ENCODE measurements at regions of chr13 and their contacts with region 1.

Region 1: GRCh38 chr13:110715395-110716235 is 2.1 kb downstream of the ING1 start:
- DNase-seq: peak; percentile 93
- ATAC-seq: peak; percentile 68
- H3K4me3 Mint-ChIP-seq: peak overlapping the region; percentile 91
- H3K27ac Mint-ChIP-seq: peak overlapping the region; percentile 93
- H3K4me1 Mint-ChIP-seq: peaks cover 20% of the 10 kb centered on the region
- H3K27me3 Mint-ChIP-seq: no peaks in the 10 kb centered on the region

Region 2: GRCh38 chr13:110615322-110616102 is 100.1 kb before region 1 on chr13 and contains the start of gene NAXD:
- POLR2A ChIA-PET with region 1: interaction called, 15 read pairs
- DNase-seq: peak; percentile 83
- ATAC-seq: peak; percentile 92
- H3K4me3 Mint-ChIP-seq: peak within 1 kb of the TSS; percentile 90
- H3K27ac Mint-ChIP-seq: peak within 1 kb of the TSS; percentile 95
- H3K4me1 Mint-ChIP-seq: peaks cover 18% of the 10 kb centered on the region
- H3K27me3 Mint-ChIP-seq: no peaks in the 10 kb centered on the region
- total RNA-seq, gene NAXD: 31.3 TPM

Region 3: GRCh38 chr13:110822669-110822945 is 107.0 kb after region 1 on chr13:
- POLR2A ChIA-PET with region 1: interaction called, 10 read pairs
- DNase-seq: no peak
- ATAC-seq: peak; percentile 75
- H3K4me3 Mint-ChIP-seq: peak overlapping the region; percentile 83
- H3K27ac Mint-ChIP-seq: peak overlapping the region; percentile 88
- H3K4me1 Mint-ChIP-seq: peaks cover 19% of the 10 kb centered on the region
- H3K27me3 Mint-ChIP-seq: peaks cover 2% of the 10 kb centered on the region

Region 4: GRCh38 chr13:110915057-110915873 is 199.7 kb after region 1 on chr13 and contains the start of gene ANKRD10:
- POLR2A ChIA-PET with region 1: interaction called, 22 read pairs
- DNase-seq: peak; percentile 99
- ATAC-seq: peak; percentile 81
- H3K4me3 Mint-ChIP-seq: peak within 1 kb of the TSS; percentile 93
- H3K27ac Mint-ChIP-seq: peak within 1 kb of the TSS; percentile 96
- H3K4me1 Mint-ChIP-seq: peaks cover 31% of the 10 kb centered on the region
- H3K27me3 Mint-ChIP-seq: no peaks in the 10 kb centered on the region
- total RNA-seq, gene ANKRD10: 117 to 119 TPM

Measured in activated naive CD8-positive, alpha-beta T cell treated with anti-CD3 and anti-CD28 coated beads, Interleukin-2, amount 10 ng/mL, durations not matched to agents 7 days and 5 days (primary cell).